Dendritic cell treated with granulocyte-macrophage colony-stimulating factor and Interleukin-4, amounts not matched to agents 40 ng/mL and 50 ng/mL, for 4 days (primary cell): ENCODE measurements at regions of chr6 and their contacts with region 1.

Region 1: DNA sequence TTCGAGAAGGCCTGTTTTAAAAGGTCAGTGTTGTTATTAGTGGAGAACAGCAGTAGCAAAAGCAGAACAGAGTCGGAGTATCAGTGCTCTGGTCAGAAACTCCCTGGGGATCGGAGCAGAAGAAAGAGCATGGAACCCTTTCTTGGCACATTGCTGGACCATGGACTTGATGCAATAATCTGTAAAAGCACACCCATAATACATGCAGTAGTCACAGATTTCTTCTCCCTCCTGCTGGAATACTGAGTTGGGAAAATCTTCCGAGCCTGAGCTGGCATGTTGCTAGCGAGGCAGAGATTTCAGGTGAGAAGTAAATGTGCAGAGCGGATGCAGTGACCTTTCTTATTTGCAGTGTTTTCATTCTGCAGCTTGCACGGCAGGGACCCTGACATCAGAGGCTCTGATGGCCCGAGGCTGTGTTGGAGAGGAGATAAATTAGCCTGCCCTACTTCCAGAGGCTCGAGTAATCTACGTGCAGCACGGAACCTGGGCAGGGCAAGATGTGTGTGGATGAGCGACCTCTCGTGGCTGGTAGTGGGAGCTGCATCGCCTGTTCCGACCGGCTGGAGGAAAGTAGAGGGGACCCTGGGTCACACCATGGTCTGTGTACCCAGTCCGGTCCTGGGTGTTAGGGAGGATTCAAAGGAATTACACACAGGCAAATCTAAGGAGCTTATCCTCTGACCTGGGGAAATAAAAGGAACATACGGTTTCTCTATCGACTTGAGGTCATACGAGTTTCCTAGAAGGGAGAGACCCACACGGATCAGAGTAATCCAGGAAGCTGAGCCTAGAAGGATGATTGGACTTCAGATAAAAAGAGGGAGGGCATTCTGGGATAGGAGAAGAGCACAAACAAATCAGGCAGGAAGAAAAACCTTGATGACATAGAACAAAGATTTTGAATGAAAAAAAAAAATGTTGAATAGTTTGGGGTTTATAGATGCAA is 137.0 kb upstream of the STMND1 start:
- H3K4me3 Mint-ChIP-seq: peak overlapping the region; percentile 21
- H3K27ac Mint-ChIP-seq: peak overlapping the region; percentile 47
- H3K4me1 Mint-ChIP-seq: peaks cover 20% of the 10 kb centered on the region
- H3K27me3 Mint-ChIP-seq: peaks cover 13% of the 10 kb centered on the region

Region 2: DNA sequence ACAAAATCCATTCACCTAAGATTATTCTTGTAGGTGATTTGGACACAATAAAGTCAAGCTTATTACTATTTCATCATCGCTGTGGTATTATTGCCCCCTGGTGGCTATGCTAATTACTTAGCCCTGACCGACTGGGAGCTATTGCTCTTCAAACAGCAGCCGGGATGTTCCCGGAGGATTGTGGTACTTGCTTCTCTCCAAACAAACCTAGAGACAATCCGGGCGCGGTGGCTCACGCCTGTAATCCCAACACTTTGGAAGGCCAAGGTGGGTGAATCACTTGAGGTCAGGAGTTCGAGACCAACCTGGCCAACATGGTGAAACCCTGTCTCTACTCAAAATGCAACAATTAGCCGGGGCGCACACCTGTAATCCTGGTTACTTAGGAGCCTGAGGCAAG is 121.6 kb after region 1 on chr6:
- intact Hi-C with region 1: loop called (anchors 2 kb)
- H3K4me3 Mint-ChIP-seq: no peak overlapping the region
- H3K27ac Mint-ChIP-seq: no peak overlapping the region
- H3K4me1 Mint-ChIP-seq: no peaks in the 10 kb centered on the region
- H3K27me3 Mint-ChIP-seq: peaks cover 19% of the 10 kb centered on the region